SK-MEL-5 (cell line): ENCODE measurements at regions of chr6 and their contacts with region 1.

Region 1: GRCh38 chr6:8785223-8785622 is 349.9 kb upstream of the SLC35B3 start:
- DNase-seq: no peak

Region 2: GRCh38 chr6:8888468-8888867 is 103.2 kb after region 1 on chr6:
- in situ Hi-C with region 1: loop called (anchors 25 kb)
- DNase-seq: peak; percentile 60